K562 (cell line): ENCODE measurements at regions of chr1 and their contacts with region 1.

Region 1: DNA sequence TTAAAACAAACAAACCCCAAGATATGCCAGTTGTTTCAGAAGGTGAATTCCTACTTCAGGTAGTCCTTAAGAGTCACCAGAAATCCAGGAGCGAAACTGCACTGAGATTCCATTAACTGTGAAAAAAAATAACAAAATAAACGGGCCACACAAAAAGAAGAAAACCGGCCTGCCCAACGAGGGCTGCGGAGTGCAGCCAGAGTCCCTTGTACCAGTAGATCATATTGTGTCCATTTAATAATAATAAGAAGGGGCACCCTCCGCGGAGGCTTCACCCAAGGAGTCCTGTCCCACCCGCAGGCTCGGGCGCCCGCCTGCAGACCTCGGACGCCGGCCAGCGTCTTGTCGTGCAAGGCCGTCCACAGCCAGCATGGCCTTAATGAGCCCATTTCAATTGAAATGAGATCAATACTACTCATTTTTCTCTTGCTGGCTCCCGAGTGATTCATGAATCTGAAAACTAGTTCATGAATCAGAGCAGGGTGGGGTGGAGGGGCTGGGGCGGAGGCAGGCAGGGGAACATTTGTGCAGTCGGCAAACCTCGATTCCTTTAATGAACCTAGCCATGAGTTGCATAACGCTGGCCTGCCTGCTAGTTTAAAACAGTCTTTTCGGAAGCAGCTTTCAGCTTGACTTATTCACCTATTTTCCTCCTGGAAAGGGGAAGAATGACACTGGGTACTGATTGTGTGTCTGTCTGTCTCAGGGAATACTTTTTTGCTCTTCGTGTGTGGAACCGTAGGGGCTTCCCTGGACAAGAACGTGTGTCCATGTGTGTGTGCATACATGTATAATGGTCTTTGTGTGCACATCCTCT is 113.1 kb upstream of the IRF2BP2 start:
- DNase-seq: peak; percentile 53 to 65 (median 56)
- ATAC-seq: peak; percentile 4
- H3K4me3 ChIP-seq: peak overlapping the region; percentile 17; the same call in 1 of the 2 replicates
- H3K27ac ChIP-seq: peak overlapping the region; percentile 97
- H3K4me1 ChIP-seq: peaks cover 45 to 70% of the 10 kb centered on the region in 2 experiments
- H3K27me3 ChIP-seq: no peaks in the 10 kb centered on the region
- CTCF ChIP-seq: no peak
- EP300 ChIP-seq: no peak
- POLR2A ChIP-seq: no peak
- RAD21 ChIP-seq: 0 out of 4 replicates have a peak, but pooled peaks of 1 of the 2 experiments have one; percentile 14

Region 2: DNA sequence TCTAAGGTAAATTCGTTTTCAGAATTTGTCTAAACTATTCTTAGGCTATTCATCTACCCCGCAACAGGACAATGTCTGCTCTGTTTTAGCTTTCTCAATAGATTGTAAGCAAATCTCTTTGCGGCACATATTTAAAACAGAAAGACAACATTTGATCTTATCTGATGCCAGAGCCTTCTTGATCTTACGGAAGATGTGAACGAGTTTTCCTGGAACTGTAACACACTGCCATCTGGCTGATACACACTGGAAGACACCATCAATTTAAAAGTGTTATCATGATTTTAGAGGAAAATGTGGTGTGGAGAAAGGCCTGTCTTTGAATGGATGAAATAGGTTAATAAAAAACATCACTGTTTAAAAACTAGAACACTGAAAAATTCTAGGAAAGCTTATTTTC is 313.8 kb before region 1 on chr1:
- CTCF ChIA-PET with region 1: no interaction called
- POLR2A ChIA-PET with region 1: no interaction called
- in situ Hi-C with region 1: no loop called
- intact Hi-C with region 1: no loop called
- DNase-seq: no peak
- ATAC-seq: no peak
- H3K4me3 ChIP-seq: no peak overlapping the region
- H3K27ac ChIP-seq: no peak overlapping the region
- H3K4me1 ChIP-seq: peaks cover 0 to 5% of the 10 kb centered on the region in 2 experiments; a peak in 1 of 5 replicates
- H3K27me3 ChIP-seq: no peaks in the 10 kb centered on the region
- CTCF ChIP-seq: peak in 1 of 3 experiments; percentile 42; a peak in 2 of 6 replicates
- EP300 ChIP-seq: no peak
- POLR2A ChIP-seq: no peak
- RAD21 ChIP-seq: peak; percentile 49 to 57

Region 3: DNA sequence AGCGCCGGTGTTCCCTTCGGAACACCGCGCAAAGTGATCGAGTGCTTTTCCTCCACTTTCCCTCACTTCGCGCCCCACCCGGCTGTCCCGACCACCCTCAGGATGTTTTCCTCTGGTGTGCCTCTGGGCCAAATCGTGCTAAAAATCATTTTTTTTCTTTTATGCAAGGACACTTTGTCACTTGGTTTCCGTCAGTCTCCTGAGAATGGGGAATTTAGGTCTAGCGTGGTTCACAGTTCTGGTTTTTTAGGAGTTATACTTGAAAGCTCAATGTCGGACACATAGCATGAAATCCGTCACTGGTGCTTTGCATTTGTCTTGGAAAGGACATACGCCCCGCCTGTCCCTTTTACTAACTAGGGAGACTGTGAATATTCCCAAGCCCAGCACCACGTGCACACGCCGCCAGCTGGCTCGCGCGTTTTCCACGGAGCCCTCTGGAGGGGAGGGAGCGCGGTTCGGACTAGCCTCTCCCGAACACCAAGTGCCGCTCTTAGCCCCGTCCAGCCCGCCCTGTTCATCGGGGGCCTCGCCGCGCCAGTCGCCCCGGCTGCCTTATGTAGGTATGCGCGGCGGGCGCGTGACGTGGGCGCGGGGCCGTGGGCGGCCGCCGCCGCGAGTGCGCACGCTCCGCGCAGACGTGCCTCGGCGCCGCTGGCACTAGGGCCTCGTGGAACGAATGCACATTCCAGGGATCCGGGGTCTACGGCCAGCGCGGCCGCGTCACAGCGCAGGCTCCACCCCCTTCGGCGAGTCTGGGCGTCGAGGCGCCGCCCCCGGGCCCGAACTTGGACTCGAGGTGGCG is 112.6 kb before region 1 on chr1:
- CTCF ChIA-PET with region 1: no interaction called
- POLR2A ChIA-PET with region 1: interaction called, 42 read pairs
- in situ Hi-C with region 1: loop called (anchors 10 kb)
- intact Hi-C with region 1: loop called (anchors 1 kb)
- DNase-seq: peak; percentile 70 to 84 (median 74)
- ATAC-seq: peak; percentile 3
- H3K4me3 ChIP-seq: peak overlapping the region; percentile 38
- H3K27ac ChIP-seq: peak overlapping the region; percentile 82
- H3K4me1 ChIP-seq: peaks cover 41 to 49% of the 10 kb centered on the region in 2 experiments
- H3K27me3 ChIP-seq: no peaks in the 10 kb centered on the region
- CTCF ChIP-seq: no peak; a peak in 1 of 6 replicates
- EP300 ChIP-seq: no peak
- POLR2A ChIP-seq: peak; percentile 78
- RAD21 ChIP-seq: peak in 1 of 2 experiments; percentile 36; a peak in 2 of 4 replicates

Region 4: DNA sequence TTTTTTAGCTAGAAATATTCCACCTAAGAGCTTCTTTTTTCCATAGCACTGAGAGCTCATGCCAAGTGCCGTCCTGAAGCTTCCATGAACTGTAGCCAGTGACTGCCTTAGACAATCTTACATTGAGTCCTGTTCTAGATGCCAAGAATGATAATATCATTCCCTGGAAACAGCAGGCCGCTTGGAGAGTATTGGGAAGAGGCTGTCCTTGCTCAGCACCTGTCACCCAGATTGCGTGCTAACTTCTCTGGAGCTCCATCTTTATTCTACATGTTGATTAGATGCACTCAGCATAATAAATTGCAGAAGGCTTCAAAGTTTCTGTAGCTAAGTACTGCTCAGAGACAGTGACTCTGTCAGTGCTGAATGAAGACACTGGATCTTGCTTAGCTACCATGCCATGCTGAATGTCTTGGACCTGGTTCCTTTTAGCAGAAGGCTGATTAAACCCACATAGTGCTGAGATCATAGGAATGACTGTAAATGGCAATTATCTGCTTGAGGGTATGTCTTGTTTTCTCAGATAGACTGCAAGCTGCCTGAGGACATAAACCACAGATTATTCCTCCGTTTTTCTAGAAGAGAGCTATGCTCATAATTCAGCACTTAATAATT is 30.0 kb before region 1 on chr1:
- CTCF ChIA-PET with region 1: no interaction called
- POLR2A ChIA-PET with region 1: interaction called, 16 read pairs
- in situ Hi-C with region 1: no loop called
- intact Hi-C with region 1: no loop called
- DNase-seq: no peak
- ATAC-seq: no peak
- H3K4me3 ChIP-seq: no peak overlapping the region
- H3K27ac ChIP-seq: no peak overlapping the region
- H3K4me1 ChIP-seq: peaks cover 3 to 6% of the 10 kb centered on the region in 2 experiments; a peak in 2 of 5 replicates
- H3K27me3 ChIP-seq: no peaks in the 10 kb centered on the region
- CTCF ChIP-seq: no peak
- EP300 ChIP-seq: no peak
- POLR2A ChIP-seq: no peak
- RAD21 ChIP-seq: no peak

Region 5: GRCh38 chr1:234699795-234700665 is 23.1 kb before region 1 on chr1:
- CTCF ChIA-PET with region 1: no interaction called
- POLR2A ChIA-PET with region 1: interaction called, 27 read pairs
- in situ Hi-C with region 1: no loop called
- intact Hi-C with region 1: loop called (anchors 2 kb)
- DNase-seq: peak; percentile 74 to 86 (median 82)
- ATAC-seq: peak; percentile 76
- H3K4me3 ChIP-seq: no peak overlapping the region
- H3K27ac ChIP-seq: peak overlapping the region; percentile 24; the same call in 2 of the 3 replicates
- H3K4me1 ChIP-seq: peaks cover 19 to 39% of the 10 kb centered on the region in 2 experiments; a peak in 4 of 5 replicates
- H3K27me3 ChIP-seq: no peaks in the 10 kb centered on the region
- CTCF ChIP-seq: no peak
- EP300 ChIP-seq: peak; percentile 79
- POLR2A ChIP-seq: no peak
- RAD21 ChIP-seq: 0 out of 4 replicates have a peak, but pooled peaks of 1 of the 2 experiments have one; percentile 6

Region 6: DNA sequence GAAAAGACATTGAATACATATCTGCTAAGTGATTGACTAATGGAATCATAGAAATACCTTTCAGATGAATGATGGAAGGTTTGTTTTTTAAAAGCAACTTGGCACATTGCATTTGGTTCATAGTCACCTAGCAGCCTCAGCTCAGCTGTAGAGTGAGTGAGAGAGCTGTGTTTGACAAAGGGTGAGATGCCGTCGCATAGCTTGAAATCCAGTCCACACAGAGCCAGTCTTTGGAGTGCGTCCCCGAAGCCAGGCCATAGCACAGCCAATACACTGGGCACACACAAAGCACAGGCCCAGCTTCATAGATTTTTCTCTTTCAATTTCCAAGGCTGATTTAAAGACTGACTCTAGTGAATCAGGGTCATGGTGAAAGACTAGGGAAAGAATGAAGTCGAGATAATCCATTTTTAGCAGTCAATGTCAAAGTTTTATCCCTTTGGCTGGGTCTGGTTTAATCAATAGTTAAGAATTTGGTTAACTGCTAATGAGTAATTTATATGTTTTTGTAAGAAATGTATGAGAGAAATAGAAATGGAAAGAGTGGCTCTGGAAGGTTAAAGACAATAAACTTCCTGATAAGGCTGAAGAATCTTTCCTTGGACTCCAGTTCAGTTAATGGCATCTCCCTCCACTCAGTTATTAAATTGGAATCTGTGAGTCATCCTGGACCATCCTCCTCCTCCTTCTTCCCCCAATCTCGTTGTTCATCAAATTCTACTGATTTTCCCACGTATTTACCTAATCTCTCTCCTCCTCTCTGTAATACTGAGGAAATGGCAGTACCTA is 12.0 kb before region 1 on chr1:
- CTCF ChIA-PET with region 1: no interaction called
- POLR2A ChIA-PET with region 1: interaction called, 18 read pairs
- in situ Hi-C with region 1: no loop called
- intact Hi-C with region 1: no loop called
- DNase-seq: no peak
- ATAC-seq: no peak
- H3K4me3 ChIP-seq: no peak overlapping the region
- H3K27ac ChIP-seq: no peak overlapping the region
- H3K4me1 ChIP-seq: peaks cover 18 to 19% of the 10 kb centered on the region in 2 experiments
- H3K27me3 ChIP-seq: no peaks in the 10 kb centered on the region
- CTCF ChIP-seq: no peak
- EP300 ChIP-seq: no peak
- POLR2A ChIP-seq: no peak
- RAD21 ChIP-seq: no peak

Region 7: DNA sequence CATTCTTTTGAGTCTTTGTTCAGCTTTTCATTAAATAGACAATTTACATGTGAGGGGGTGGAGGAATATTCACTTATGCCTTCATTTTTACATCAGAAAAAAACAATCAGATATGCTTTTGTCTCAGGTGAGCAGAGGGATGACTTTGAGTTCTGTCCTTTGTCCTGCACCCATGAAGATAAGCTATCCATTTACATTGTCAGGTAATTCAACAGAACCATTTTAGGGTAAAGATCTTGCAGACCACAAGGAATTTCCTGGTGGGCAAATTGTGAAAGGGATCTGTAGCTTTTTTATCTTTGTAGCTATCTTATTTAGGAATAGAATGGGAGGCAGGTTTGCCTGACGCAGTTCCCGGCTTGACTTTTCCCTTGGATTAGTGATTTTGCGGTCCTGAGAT is 129.5 kb after region 1 on chr1:
- CTCF ChIA-PET with region 1: no interaction called
- POLR2A ChIA-PET with region 1: no interaction called
- in situ Hi-C with region 1: no loop called
- intact Hi-C with region 1: no loop called
- DNase-seq: no peak
- ATAC-seq: no peak
- H3K4me3 ChIP-seq: no peak overlapping the region
- H3K27ac ChIP-seq: no peak overlapping the region
- H3K4me1 ChIP-seq: peaks cover 12 to 39% of the 10 kb centered on the region in 2 experiments; a peak in 4 of 5 replicates
- H3K27me3 ChIP-seq: no peaks in the 10 kb centered on the region
- CTCF ChIP-seq: no peak
- EP300 ChIP-seq: no peak
- POLR2A ChIP-seq: no peak
- RAD21 ChIP-seq: no peak

Region 8: GRCh38 chr1:234862944-234863515 is 139.9 kb after region 1 on chr1:
- CTCF ChIA-PET with region 1: no interaction called
- POLR2A ChIA-PET with region 1: interaction called, 12 read pairs
- in situ Hi-C with region 1: no loop called
- intact Hi-C with region 1: loop called (anchors 1 kb)
- DNase-seq: no peak
- ATAC-seq: no peak
- H3K4me3 ChIP-seq: no peak overlapping the region
- H3K27ac ChIP-seq: no peak overlapping the region
- H3K4me1 ChIP-seq: peaks cover 26 to 42% of the 10 kb centered on the region in 2 experiments; a peak in 4 of 5 replicates
- H3K27me3 ChIP-seq: no peaks in the 10 kb centered on the region
- CTCF ChIP-seq: no peak
- EP300 ChIP-seq: no peak
- POLR2A ChIP-seq: no peak
- RAD21 ChIP-seq: 0 out of 4 replicates have a peak, but pooled peaks of 1 of the 2 experiments have one; percentile 9

Region 9: GRCh38 chr1:234955107-234955731 is 232.1 kb after region 1 on chr1:
- CTCF ChIA-PET with region 1: no interaction called
- POLR2A ChIA-PET with region 1: no interaction called
- in situ Hi-C with region 1: no loop called
- intact Hi-C with region 1: loop called (anchors 5 kb)
- DNase-seq: peak in 2 of 4 experiments; percentile 37 to 62
- ATAC-seq: peak; percentile 18; the same call in 2 of the 3 replicates
- H3K4me3 ChIP-seq: no peak overlapping the region
- H3K27ac ChIP-seq: peak overlapping the region; percentile 31; the same call in 2 of the 3 replicates
- H3K4me1 ChIP-seq: peaks cover 36 to 51% of the 10 kb centered on the region in 2 experiments
- H3K27me3 ChIP-seq: no peaks in the 10 kb centered on the region
- CTCF ChIP-seq: no peak
- EP300 ChIP-seq: no peak
- POLR2A ChIP-seq: no peak
- RAD21 ChIP-seq: peak; percentile 7 to 42; a peak in 2 of 4 replicates